B cell (primary cell): ENCODE measurements at regions of chr10 and their contacts with region 1.

Region 1: DNA sequence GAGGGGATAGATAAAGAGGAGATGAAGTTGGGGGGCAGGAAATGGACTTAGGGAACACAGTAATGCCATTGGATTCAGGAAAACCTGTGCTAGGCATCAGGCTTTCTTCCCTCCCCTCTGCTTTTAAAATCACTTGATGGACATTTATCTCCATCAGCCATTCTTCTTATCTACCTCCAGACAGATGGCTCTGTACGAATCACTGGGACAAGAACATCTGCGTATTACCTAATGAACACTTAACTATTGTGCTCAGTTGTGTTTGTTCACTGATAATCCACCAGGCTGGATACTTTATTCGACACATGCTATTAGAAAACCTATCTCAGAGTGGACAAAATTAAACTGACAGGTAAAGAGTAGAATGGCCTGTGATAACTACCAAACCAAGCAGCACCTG is 40.0 kb downstream of the TNKS2 start:
- DNase-seq: no peak
- ATAC-seq: no peak
- H3K4me3 ChIP-seq: no peak overlapping the region
- H3K4me3 Mint-ChIP-seq: no peak overlapping the region
- H3K27ac ChIP-seq: no peak overlapping the region
- H3K27ac Mint-ChIP-seq: no peak overlapping the region
- H3K4me1 ChIP-seq: no peaks in the 10 kb centered on the region
- H3K4me1 Mint-ChIP-seq: no peaks in the 10 kb centered on the region
- H3K27me3 ChIP-seq: no peaks in the 10 kb centered on the region
- H3K27me3 Mint-ChIP-seq: no peaks in the 10 kb centered on the region
- CTCF ChIP-seq: no peak

Region 2: GRCh38 chr10:92124616-92125143 is 286.5 kb after region 1 on chr10:
- CTCF ChIA-PET with region 1: no interaction called
- POLR2A ChIA-PET with region 1: no interaction called
- intact Hi-C with region 1: no loop called
- DNase-seq: no peak
- ATAC-seq: no peak
- H3K4me3 ChIP-seq: no peak overlapping the region
- H3K4me3 Mint-ChIP-seq: no peak overlapping the region
- H3K27ac ChIP-seq: no peak overlapping the region
- H3K27ac Mint-ChIP-seq: no peak overlapping the region
- H3K4me1 ChIP-seq: peaks cover 0 to 6% of the 10 kb centered on the region in 2 donors
- H3K4me1 Mint-ChIP-seq: peaks cover 18% of the 10 kb centered on the region
- H3K27me3 ChIP-seq: no peaks in the 10 kb centered on the region
- H3K27me3 Mint-ChIP-seq: no peaks in the 10 kb centered on the region
- CTCF ChIP-seq: no peak

Region 3: DNA sequence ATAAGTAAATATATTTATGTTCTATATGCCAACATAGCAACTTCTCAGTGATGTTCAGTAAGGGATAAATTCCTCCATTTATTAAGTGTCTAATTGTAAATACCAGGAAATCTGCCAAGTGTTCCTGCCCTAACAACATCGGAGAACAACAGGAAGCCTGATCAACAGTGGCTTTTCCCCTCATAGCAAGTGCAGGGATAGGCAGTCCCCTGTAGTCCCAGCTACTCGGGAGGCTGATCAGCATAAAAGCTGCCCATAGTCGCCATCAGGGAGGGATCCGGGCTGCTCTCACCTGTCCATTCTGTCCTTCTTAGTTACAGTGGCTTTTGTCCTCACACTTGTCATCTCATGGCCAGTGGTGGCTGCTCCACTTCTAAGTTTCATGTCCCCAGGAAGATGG is 594.4 kb after region 1 on chr10:
- CTCF ChIA-PET with region 1: no interaction called
- POLR2A ChIA-PET with region 1: no interaction called
- intact Hi-C with region 1: loop called (anchors 10 kb)
- DNase-seq: no peak
- ATAC-seq: no peak
- H3K4me3 ChIP-seq: no peak overlapping the region
- H3K4me3 Mint-ChIP-seq: no peak overlapping the region
- H3K27ac ChIP-seq: no peak overlapping the region
- H3K27ac Mint-ChIP-seq: no peak overlapping the region
- H3K4me1 ChIP-seq: no peaks in the 10 kb centered on the region
- H3K4me1 Mint-ChIP-seq: no peaks in the 10 kb centered on the region
- H3K27me3 ChIP-seq: no peaks in the 10 kb centered on the region
- H3K27me3 Mint-ChIP-seq: no peaks in the 10 kb centered on the region
- CTCF ChIP-seq: no peak